Sciatic nerve (tissue), 2 donors: ENCODE measurements at regions of chr6 and their contacts with region 1.

Region 1: GRCh38 chr6:108312605-108313004 is 17.8 kb downstream of the AFG1L start:
- DNase-seq: no peak
- ATAC-seq: no peak

Region 2: GRCh38 chr6:107064579-107065065 is 1248.0 kb before region 1 on chr6:
- intact Hi-C with region 1: no loop called
- DNase-seq: peak; percentile 71
- ATAC-seq: peak; percentile 56

Region 3: GRCh38 chr6:108294727-108295625 is 17.6 kb before region 1 on chr6 and contains the start of gene AFG1L:
- intact Hi-C with region 1: no loop called
- DNase-seq: peak; percentile 95
- ATAC-seq: peak; percentile 100
- total RNA-seq, gene AFG1L: 8.8 TPM

Region 4: DNA sequence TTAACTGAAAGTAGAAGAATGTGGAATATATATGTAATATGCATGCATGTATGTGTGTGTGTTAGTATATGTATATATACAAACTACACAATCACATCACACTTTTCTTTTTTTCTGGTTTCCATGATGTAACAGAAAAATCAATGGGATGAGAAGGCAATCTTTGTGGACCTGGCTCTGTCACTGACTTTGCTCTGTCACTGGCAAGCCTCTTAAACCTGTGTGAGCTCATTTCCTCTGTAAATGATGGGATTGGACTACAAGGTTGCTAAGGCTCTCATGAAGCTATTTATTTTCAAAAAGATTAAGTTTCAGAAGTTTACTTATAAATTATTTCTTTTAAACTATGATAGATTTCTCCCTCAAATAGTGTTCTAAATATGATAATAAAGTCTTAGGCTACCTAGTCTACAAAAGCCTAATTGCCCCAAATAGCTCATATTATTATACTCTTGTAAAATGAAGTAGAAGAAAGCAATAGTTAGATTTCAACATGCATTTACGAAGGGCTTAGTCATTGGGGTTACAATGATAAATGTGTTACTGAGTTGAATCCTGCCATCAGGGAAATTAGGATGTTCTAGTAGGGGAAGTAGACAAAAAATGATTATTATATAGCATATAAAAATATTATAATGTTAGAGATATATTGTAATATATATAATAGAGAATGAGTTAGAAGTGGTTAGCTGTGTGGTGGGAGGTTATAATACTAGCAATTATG is 111.5 kb after region 1 on chr6:
- intact Hi-C with region 1: no loop called
- DNase-seq: no peak
- ATAC-seq: no peak

Region 5: DNA sequence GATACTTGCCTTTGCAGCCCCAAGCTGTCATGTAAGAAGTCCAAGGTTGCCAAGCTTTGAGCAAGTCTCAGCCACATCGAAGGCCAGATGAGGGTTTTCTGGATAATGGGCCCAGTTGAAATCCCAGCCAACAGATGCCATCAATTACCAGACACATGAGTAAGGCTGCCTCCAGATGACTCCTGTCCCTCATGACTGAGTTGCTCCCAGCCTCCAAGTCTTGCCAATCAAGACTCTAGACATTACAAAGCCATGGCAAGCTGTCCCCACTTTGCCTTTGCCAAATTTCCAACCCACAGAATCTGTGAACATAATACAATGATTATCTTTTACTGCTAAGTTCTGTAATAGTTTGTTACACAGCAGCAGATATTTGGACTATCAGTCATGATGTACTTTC is 458.8 kb after region 1 on chr6:
- intact Hi-C with region 1: no loop called
- DNase-seq: no peak
- ATAC-seq: no peak

Region 6: DNA sequence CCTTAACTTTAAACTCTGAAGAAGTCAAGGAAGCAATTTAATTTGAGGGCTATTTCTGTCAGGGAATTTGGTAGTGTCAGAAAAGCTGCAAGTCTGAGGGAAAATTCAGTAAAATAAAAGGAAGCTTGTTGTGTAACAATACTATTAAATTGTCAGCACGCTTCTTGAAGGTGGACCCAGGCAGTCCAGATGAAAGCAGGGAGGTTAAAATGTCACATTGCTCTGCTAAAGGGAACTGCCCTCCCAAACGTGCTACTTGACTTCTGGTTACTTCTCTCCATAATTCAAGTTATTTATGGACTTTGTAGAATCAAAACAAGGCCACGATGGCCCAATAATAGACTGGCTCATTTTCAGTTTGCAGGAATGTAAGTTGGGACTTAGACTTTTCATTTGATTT is 507.4 kb after region 1 on chr6:
- intact Hi-C with region 1: loop called (anchors 10 kb)
- DNase-seq: no peak
- ATAC-seq: peak; percentile 79